Pancreas (tissue), 10 donors: ENCODE measurements at regions of chr1 and their contacts with region 1.

Region 1: DNA sequence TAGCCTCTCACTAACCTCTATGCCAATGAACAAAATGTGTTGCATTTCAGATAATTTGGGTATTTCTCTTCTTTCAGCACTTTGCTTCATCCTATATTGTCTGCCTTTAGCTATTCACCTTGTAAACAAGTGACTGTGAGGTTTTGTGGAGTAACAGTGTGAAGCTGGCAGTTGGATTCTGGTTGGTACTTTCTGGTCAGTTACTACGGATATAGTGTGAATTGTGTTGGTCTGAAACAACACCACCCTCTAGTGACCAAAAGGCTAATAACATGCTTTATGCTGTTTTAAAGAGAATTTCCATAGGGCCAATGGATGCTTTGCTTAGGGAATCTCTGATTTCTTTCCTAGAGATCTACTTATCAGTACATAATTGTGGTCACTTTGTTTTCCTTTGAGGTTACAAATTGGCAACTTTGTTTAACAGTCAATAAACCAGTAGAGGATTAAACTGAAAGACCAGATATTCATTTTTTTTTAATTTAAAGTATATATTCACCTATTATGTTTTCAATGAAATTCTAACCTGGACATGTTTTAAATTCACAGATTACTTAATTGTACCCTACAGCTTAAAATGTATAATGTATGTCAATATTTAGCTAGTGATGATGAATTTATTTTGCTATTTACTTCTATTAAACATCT is 2.5 kb upstream of the PTGER3 start:
- DNase-seq: peak in 1 of 6 donors; percentile 18
- ATAC-seq: peak; percentile 24 to 69 (median 66)
- H3K4me3 ChIP-seq: no peak overlapping the region
- H3K27ac ChIP-seq: no peak overlapping the region
- H3K4me1 ChIP-seq: no peaks in the 10 kb centered on the region
- H3K27me3 ChIP-seq: no peaks in the 10 kb centered on the region
- CTCF ChIP-seq: peak; percentile 42 to 63 (median 56)

Region 2: DNA sequence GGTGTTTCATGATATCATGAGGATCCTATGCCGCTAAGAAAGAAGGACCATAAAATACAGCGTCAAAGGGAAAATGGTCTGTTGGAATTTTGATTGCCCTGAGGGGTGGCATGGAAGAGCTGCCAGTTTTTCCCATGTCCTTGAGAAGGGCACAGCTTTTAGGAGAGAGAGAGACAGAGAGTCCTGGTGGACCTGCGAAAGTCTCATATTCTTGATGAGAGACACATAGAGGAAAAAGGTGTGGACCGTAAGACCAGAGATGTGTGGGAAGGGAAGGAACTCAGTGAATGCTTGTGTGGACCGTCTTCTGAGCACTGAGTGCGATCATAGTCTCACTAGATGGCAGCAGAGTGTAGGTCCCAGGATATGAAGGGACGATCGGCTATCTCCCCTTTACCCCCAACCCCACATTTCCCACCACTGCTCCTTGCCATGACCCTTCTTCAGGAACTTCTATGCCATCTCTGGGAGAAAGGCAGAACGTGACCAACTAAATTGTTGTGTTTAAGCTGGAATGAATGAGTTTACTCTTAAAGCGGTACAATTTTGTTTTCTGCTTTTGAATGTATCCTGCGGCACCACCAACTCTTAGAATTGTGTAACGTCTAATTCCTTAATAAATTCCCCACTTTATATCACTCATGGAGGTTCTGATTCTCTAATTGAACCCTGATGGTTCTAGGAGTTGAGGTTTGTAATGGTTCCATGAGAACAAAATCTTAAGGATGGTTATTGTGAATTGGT is 521.3 kb before region 1 on chr1:
- intact Hi-C with region 1: loop called in 2 of 3 experiments (anchors 10 kb)
- DNase-seq: peak in 2 of 6 donors; percentile 18 to 36
- ATAC-seq: peak; percentile 53 to 92 (median 88)
- H3K4me3 ChIP-seq: no peak overlapping the region
- H3K27ac ChIP-seq: no peak overlapping the region
- H3K4me1 ChIP-seq: no peaks in the 10 kb centered on the region
- H3K27me3 ChIP-seq: no peaks in the 10 kb centered on the region
- CTCF ChIP-seq: peak in 3 of 4 donors; percentile 37 to 49 (median 38)

Region 3: DNA sequence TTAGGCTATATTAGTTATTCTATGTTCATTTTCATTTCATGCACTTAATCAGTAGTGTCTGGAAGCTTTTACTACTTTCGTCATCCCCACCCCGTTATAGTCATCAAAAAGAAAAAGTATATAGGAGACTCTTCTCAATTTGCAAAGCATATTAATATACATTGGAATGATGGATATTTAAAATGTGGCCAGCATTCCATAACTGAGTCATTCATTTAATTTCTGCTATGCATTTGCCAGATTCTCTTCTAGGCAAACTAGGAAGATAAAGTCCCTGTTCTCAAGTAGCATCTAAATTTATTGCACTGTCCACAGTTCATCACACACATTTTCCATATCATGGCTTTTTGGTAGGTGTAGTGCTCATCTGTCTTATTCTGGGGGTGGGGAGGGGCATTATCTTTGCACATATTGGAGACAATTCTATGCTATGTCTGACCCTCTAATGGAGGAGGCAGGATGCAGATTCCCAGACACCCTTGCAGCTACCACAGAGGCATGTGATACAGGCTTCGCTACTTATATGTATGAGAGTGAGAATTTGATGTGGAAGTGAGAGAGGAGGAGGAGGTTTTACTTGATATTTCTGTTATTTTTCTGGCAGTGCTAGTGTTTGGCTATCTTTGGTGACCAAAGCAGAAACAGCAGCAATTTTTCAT is 513.2 kb before region 1 on chr1:
- intact Hi-C with region 1: loop called in 1 of 3 experiments (anchors 10 kb)
- DNase-seq: no peak
- ATAC-seq: no peak
- H3K4me3 ChIP-seq: no peak overlapping the region
- H3K27ac ChIP-seq: no peak overlapping the region
- H3K4me1 ChIP-seq: no peaks in the 10 kb centered on the region
- H3K27me3 ChIP-seq: no peaks in the 10 kb centered on the region
- CTCF ChIP-seq: no peak

Region 4: GRCh38 chr1:70685300-70686241 is 364.5 kb before region 1 on chr1:
- intact Hi-C with region 1: loop called in 2 of 3 experiments (anchors 5 to 10 kb)
- DNase-seq: peak; percentile 49 to 84 (median 67)
- ATAC-seq: peak; percentile 95 to 100 (median 100)
- H3K4me3 ChIP-seq: no peak overlapping the region
- H3K27ac ChIP-seq: no peak overlapping the region
- H3K4me1 ChIP-seq: no peaks in the 10 kb centered on the region
- H3K27me3 ChIP-seq: no peaks in the 10 kb centered on the region
- CTCF ChIP-seq: peak; percentile 80 to 90 (median 82)